Right lobe of liver (tissue), 6 donors: ENCODE measurements at regions of chr9 and their contacts with region 1.

Region 1: DNA sequence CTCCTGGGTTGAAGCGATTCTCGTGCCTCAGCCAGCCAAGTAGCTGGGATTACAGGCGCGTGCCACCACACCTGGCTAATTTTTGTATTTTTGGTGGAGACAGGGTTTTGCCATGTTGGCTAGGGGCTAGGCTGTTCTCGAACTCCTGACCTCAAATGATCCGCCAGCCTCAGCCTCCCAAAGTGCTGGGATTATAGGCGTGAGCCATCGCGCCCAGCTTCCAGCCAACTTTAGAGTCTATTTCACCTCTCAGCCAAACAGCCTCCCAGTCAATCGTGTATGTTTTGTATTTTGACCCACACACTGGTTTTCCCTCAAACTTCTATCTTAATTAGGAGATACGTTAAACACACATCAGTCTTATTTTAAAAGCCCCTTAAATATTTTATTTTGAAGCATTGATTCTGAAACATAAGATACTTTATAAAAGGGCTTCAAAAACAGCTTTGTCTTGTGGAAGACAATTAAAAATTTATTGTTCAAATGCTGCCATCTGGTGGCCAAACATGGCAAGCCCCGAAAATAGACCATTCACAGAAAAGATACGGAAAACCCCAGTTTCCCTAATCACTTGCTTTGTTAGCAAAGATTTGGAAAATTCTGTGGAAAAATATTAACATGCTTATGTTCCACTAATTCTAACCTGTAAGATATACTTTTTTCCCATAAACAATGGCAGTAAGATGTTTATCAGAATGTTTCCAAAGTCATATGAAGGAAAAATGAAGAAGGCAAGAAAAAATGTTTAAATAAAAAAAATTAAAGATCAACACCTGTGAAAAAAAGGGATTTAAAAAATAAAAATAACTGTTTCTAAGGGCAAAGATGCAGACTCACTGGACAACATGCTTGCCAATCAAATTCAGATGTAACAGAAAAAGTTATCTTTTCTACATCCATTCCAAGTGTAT is 33.1 kb downstream of the APTX start:
- DNase-seq: peak in 1 of 3 donors; percentile 39
- ATAC-seq: peak; percentile 68 to 83 (median 78)
- H3K4me3 ChIP-seq: no peak overlapping the region
- H3K27ac ChIP-seq: no peak overlapping the region
- H3K4me1 ChIP-seq: no peaks in the 10 kb centered on the region
- H3K27me3 ChIP-seq: no peaks in the 10 kb centered on the region
- CTCF ChIP-seq: peak; percentile 80 to 91 (median 84)
- POLR2A ChIP-seq: no peak

Region 2: GRCh38 chr9:32579706-32580331 is 388.5 kb before region 1 on chr9:
- intact Hi-C with region 1: loop called (anchors 5 to 10 kb)
- DNase-seq: peak; percentile 71 to 72 (median 71)
- ATAC-seq: peak; percentile 83 to 92 (median 90)
- H3K4me3 ChIP-seq: no peak overlapping the region
- H3K27ac ChIP-seq: no peak overlapping the region
- H3K4me1 ChIP-seq: no peaks in the 10 kb centered on the region
- H3K27me3 ChIP-seq: no peaks in the 10 kb centered on the region
- CTCF ChIP-seq: peak; percentile 87 to 96 (median 92)
- POLR2A ChIP-seq: no peak

Region 3: GRCh38 chr9:32589083-32589723 is 379.2 kb before region 1 on chr9:
- intact Hi-C with region 1: loop called (anchors 5 to 10 kb)
- DNase-seq: no peak
- ATAC-seq: peak; percentile 85 to 96 (median 91)
- H3K4me3 ChIP-seq: no peak overlapping the region
- H3K27ac ChIP-seq: no peak overlapping the region
- H3K4me1 ChIP-seq: peaks cover 0 to 5% (median under 1%) of the 10 kb centered on the region in 4 donors
- H3K27me3 ChIP-seq: no peaks in the 10 kb centered on the region
- CTCF ChIP-seq: peak; percentile 29 to 59 (median 54)
- POLR2A ChIP-seq: no peak

Region 4: DNA sequence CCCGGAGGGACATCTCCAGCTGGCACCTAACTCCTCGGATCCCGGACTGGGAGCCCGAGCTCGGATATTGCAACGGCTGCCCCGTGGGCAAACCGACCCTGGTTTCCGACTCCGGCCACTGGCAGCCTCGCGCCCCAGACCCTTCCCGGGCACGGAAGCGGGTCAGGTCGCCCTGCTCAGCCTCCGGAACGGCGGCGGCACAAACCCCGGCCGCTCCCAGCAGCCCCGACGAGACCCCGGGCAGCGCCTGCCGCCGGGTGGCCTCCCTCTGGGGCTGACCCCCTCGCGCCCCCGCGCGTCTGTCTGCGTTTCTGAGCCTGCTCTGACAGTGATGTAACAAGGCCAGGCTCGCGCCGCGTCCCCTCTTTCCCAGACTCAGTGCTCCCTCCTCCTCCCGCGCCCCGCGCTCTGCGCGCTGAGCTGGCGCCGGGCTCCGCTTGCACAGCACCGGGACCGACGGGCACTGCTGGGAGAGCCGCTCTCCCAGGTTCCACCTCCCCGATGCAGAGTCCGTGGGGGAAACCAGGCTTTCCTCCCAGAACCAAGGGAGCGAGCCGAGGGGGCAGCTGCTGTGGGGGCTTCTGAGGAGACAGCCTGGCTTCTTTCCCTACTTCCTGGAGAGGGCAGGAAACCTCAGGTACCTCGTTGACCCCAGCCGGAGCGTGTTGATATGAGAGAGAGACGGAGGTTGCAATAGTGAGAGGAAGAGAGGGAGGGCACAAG is 185.0 kb before region 1 on chr9 and contains the start of gene TMEM215:
- intact Hi-C with region 1: no loop called
- DNase-seq: peak in 2 of 3 donors; percentile 20 to 49
- ATAC-seq: peak in 1 of 4 donors; percentile 47
- H3K4me3 ChIP-seq: no peak within 1 kb of the TSS
- H3K27ac ChIP-seq: no peak within 1 kb of the TSS
- H3K4me1 ChIP-seq: no peaks in the 10 kb centered on the region
- H3K27me3 ChIP-seq: peaks cover 0 to 11% of the 10 kb centered on the region in 2 donors
- CTCF ChIP-seq: no peak
- POLR2A ChIP-seq: no peak
- total RNA-seq, gene TMEM215: not detected